PC-3 (cell line): ENCODE measurements at regions of chr5 and their contacts with region 1.

Region 1: DNA sequence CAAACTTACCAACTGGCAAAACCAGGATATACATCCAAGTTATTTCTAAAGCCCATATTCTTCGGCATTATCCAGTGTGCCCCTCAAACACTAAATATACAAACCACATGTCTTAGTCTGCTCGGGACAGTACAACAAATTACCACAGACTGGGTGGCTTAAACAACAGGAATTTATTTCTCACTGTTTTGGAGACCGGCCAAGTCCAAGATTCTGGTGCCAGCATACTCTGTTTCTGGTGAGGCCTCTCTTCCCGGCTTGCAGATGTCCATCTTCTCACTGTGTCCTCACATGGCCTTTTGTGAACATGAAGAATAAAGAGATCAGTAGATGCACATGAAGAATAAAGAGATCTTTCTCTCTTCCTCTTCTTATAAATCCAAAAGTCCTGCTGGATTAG is 12.9 kb upstream of the SLCO6A1 start:
- DNase-seq: peak; percentile 23
- ATAC-seq: no peak
- H3K4me3 ChIP-seq: no peak overlapping the region
- H3K27ac ChIP-seq: no peak overlapping the region
- H3K4me1 ChIP-seq: no peaks in the 10 kb centered on the region
- H3K27me3 ChIP-seq: peaks cover 46% of the 10 kb centered on the region
- CTCF ChIP-seq: no peak

Region 2: GRCh38 chr5:102453716-102454115 is 58.0 kb before region 1 on chr5:
- CTCF ChIA-PET with region 1: interaction called, 7 read pairs
- POLR2A ChIA-PET with region 1: no interaction called
- intact Hi-C with region 1: loop called (anchors 5 kb)
- DNase-seq: no peak
- ATAC-seq: no peak
- H3K4me3 ChIP-seq: peak overlapping the region; percentile 36
- H3K27ac ChIP-seq: no peak overlapping the region
- H3K4me1 ChIP-seq: no peaks in the 10 kb centered on the region
- H3K27me3 ChIP-seq: peaks cover 5% of the 10 kb centered on the region
- CTCF ChIP-seq: no peak

Region 3: GRCh38 chr5:102583276-102584124 is 71.8 kb after region 1 on chr5:
- CTCF ChIA-PET with region 1: no interaction called
- POLR2A ChIA-PET with region 1: no interaction called
- intact Hi-C with region 1: no loop called
- DNase-seq: peak; percentile 74
- ATAC-seq: peak; percentile 58
- H3K4me3 ChIP-seq: peak overlapping the region; percentile 14; the same call in 1 of the 2 replicates
- H3K27ac ChIP-seq: no peak overlapping the region
- H3K4me1 ChIP-seq: peaks cover 6% of the 10 kb centered on the region; the same call in 1 of the 2 replicates
- H3K27me3 ChIP-seq: no peaks in the 10 kb centered on the region
- CTCF ChIP-seq: peak; percentile 98